ENCODE measurements at regions of chr10 and their contacts with region 1.

Region 1: DNA sequence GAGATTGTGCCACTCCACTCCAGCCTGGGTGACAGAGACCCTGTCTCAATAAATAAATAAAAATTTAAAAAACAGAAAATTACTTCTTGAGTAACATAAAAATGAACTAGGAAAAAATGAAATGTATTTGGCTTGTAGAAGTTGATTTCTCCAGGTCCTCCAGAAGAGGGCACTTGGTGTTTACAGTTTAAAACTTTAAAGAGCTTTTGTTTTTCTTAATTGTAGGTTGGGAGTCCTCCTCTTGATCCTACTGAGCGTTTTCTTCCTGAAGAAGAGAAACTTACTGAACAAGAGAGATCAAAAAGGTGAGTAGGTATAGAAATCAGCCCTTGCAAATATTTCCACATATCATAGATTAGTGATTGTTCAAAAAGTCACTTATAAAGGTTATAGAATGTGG is 16.2 kb downstream of the KIFBP start:
- DNase-seq: no peak
- H3K4me3 ChIP-seq: no peak overlapping the region
- H3K27ac ChIP-seq: no peak overlapping the region
- H3K4me1 ChIP-seq: no peaks in the 10 kb centered on the region
- H3K27me3 ChIP-seq: no peaks in the 10 kb centered on the region
- CTCF ChIP-seq: peak; percentile 22 to 53 (median 40)
- POLR2A ChIP-seq: no peak

Region 2: DNA sequence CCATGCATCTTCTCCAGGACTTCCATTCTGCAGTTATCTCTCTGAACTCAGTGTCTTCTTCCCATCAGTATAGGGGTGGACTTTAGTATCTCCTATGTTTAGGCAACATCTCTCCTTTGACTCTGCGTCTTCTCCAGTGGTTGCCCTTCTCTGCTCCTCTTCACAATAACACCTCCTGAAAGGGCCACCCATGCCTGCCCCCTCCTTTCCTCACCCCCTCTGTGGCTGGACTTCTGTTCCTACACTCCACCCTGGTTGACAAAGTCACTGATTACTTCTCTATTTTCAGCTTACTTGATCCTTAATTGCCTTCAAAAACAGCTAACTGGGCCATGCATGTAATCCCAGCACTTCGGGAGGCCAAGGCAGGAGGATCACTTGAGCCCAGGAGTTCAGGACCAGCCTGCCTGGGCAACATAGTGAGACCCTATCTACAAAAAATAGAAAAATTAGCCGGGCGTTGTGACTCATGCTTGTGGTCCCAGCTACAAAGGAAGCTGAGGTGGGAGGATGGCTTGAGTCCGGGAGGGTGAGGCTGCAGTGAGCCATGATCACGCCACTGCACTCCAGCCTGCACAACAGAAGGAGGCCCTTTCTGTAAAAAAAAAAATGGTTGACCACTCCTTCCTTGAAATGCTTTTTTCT is 96.8 kb after region 1 on chr10:
- intact Hi-C with region 1: loop called (anchors 10 kb)
- DNase-seq: no peak
- H3K4me3 ChIP-seq: no peak overlapping the region
- H3K27ac ChIP-seq: no peak overlapping the region
- H3K4me1 ChIP-seq: no peaks in the 10 kb centered on the region
- H3K27me3 ChIP-seq: no peaks in the 10 kb centered on the region
- CTCF ChIP-seq: no peak
- POLR2A ChIP-seq: no peak

Measured in uterus (tissue), 4 donors.